Upper lobe of right lung (tissue), 1 donor: ENCODE measurements at regions of chr1 and their contacts with region 1.

Region 1: DNA sequence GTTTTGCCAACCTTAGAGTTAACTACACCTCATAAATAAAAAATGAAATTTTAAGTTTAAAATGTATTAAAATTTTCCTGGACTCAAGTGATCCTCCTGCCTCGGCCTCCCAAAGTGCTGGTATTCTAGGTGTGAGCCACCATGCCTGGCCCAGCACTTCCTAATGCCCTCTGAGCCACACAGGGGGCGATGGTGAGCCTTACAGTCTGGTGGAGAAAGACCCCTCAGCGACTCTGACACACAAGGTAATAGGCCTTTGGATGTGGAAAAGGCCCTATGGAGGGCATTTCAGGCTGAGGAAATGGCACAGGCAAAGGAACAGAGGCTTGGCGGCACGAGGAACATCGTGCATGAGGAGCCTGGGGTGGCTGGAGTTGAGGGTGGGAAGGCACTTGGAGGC is 6.7 kb downstream of the CITED4 start:
- DNase-seq: no peak
- ATAC-seq: no peak
- H3K4me3 ChIP-seq: no peak overlapping the region
- H3K27ac ChIP-seq: no peak overlapping the region
- H3K4me1 ChIP-seq: peaks cover 3% of the 10 kb centered on the region
- H3K27me3 ChIP-seq: no peaks in the 10 kb centered on the region
- CTCF ChIP-seq: no peak

Region 2: DNA sequence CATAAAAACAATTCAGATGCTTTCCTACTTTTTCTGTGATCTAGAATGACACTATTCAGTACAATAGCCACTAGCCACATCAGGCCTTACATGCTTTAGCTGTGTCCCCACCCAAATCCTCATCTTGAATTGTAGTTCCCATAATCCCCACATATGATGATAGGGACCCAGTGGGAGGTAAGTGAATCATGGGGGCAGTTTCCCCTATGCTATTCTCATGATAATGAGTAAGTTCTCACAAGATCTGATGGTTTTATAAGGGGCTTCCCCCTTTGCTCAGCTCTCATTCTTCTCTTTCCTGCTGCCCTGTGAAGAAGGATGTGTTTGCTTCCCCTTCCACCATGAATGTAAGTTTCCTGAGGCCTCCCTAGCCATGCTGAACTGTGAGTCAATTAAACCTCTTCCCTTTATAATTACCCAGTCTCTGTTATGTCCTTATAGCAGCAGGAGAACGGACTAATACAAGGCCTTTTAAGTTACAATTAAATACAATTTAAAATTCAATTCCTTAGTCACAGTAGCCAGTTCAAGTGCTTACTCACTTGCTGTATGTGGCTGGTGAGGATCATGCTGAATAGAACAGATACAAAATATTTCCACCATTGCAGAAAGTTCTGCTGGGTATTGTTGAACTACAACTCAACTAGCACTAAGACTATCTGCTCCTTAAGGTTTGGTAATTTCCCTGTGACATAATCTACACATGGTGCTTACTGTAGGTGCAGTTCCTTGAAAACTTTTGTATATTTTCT is 279.9 kb after region 1 on chr1:
- intact Hi-C with region 1: loop called (anchors 5 kb)
- DNase-seq: no peak
- ATAC-seq: no peak
- H3K4me3 ChIP-seq: no peak overlapping the region
- H3K27ac ChIP-seq: no peak overlapping the region
- H3K4me1 ChIP-seq: no peaks in the 10 kb centered on the region
- H3K27me3 ChIP-seq: no peaks in the 10 kb centered on the region
- CTCF ChIP-seq: no peak